ENCODE measurements at regions of chr14 and their contacts with region 1.

Region 1: GRCh38 chr14:74860906-74861733 is 14.8 kb downstream of the PROX2 start:
- DNase-seq: peak; percentile 94
- H3K4me3 Mint-ChIP-seq: no peak overlapping the region
- H3K27ac Mint-ChIP-seq: no peak overlapping the region
- H3K4me1 Mint-ChIP-seq: peaks cover under 1% of the 10 kb centered on the region
- H3K27me3 Mint-ChIP-seq: no peaks in the 10 kb centered on the region

Region 2: DNA sequence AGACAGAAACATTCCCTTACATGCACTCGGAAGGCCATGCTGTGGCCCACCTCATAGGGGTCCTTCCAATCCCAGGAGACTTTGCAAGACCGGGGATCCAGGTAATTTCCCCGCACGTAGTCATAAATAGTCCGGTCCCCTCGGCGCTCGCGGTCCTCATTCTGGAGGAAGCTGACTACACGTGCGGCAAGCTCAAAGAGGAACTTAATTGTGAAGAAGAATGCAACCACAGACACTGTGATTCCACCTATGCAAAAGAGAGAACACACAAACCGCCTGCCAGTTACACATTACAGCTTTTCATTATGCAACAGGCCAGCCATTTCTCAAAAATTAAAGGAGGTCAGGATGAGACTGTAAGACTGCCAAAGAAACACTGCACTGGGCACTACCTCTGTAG is 176.7 kb before region 1 on chr14:
- CTCF ChIA-PET with region 1: no interaction called
- POLR2A ChIA-PET with region 1: no interaction called
- intact Hi-C with region 1: no loop called
- DNase-seq: no peak
- H3K4me3 Mint-ChIP-seq: no peak overlapping the region
- H3K27ac Mint-ChIP-seq: no peak overlapping the region
- H3K4me1 Mint-ChIP-seq: no peaks in the 10 kb centered on the region
- H3K27me3 Mint-ChIP-seq: no peaks in the 10 kb centered on the region

Region 3: GRCh38 chr14:74881431-74882361 is 20.6 kb after region 1 on chr14 and contains the start of gene DLST:
- CTCF ChIA-PET with region 1: interaction called, 165 read pairs
- POLR2A ChIA-PET with region 1: interaction called, 6 read pairs
- intact Hi-C with region 1: loop called (anchors 2 kb)
- DNase-seq: peak; percentile 91
- H3K4me3 Mint-ChIP-seq: peak within 1 kb of the TSS; percentile 99
- H3K27ac Mint-ChIP-seq: peak within 1 kb of the TSS; percentile 97
- H3K4me1 Mint-ChIP-seq: peaks cover 66% of the 10 kb centered on the region
- H3K27me3 Mint-ChIP-seq: no peaks in the 10 kb centered on the region
- total RNA-seq, gene DLST: 132 to 137 TPM

Region 4: DNA sequence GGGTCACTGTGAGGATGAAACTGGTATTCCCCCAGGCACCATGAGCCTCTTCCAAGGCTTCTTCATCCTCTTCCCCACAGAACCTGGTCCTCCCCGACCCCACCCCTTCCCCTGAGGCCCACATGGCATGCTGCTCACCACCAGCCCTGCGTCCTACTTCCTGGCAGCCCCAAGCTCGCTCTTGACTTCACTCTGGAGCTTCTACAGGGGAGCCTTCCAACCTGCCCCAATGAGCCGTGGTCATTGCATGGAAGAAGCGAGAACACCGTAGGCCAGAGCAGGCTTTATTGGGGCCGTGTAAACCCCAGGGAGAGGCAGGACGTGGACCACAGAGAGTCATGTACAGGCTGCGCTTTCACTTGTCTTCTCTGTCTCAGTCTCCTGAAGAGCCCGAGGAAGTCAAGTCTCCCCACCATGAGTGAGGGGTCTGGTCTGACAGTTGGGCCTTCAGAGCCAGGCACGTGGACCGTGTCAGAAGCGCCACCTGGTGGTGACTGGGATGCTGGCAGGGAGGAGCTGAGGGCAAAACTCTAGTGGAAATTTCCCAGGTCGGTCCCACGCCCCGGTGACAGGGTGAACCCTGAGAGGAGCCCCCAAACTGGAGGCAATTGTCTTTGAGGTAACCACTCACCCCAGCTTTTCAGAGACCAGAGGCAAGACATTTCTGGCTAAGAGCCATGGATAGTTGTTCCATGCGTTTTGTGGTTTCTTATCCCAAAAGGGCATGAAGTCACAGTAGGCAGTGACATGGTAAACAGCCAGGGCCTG is 44.4 kb after region 1 on chr14:
- CTCF ChIA-PET with region 1: interaction called, 499 read pairs
- POLR2A ChIA-PET with region 1: interaction called, 4 read pairs
- intact Hi-C with region 1: loop called (anchors 1 kb)
- DNase-seq: peak; percentile 83
- H3K4me3 Mint-ChIP-seq: no peak overlapping the region
- H3K27ac Mint-ChIP-seq: peak overlapping the region; percentile 8
- H3K4me1 Mint-ChIP-seq: no peaks in the 10 kb centered on the region
- H3K27me3 Mint-ChIP-seq: no peaks in the 10 kb centered on the region

Region 5: DNA sequence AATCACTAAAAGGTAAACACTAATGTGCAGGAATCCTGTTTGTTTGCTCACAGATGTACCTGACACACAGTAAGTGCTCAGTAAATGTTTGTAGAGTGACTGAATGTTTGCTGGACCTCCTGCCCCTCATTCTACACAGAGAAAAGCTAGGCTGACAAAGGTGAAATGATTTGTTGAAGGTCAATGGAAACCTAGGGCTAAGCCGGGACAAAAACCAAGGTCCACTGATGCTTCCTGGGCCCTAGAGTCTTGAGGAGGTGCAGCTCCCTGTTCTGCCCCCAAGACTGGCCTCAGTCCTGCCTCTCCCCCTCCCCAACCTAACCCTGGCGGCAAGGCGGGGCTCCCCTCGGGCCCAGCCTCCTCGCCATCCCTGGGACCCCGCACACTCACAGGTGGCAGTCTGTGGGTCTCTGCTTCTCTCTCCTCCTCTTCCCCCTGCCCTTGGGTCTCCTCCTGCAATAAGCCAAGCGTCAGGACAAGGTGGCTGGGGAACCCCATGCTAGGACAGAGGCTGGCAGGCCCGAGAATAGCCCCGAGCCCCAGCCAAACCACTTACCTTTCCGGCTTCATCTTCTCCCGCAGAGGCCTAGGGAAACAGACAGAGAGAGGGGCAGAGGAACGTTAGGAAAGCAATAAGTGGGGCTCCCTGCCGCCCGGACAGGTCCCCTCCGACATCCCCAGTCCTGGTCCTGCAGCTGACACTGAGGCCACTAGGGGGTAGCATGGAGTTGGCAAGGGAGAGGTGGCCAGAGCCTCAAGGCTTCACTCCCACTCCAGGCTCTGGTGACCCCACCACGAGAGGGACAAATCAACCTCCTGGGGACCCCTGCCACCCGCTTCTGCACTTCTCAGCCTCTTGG is 84.9 kb after region 1 on chr14:
- CTCF ChIA-PET with region 1: interaction called, 35 read pairs
- POLR2A ChIA-PET with region 1: no interaction called
- intact Hi-C with region 1: no loop called
- DNase-seq: peak; percentile 84
- H3K4me3 Mint-ChIP-seq: no peak overlapping the region
- H3K27ac Mint-ChIP-seq: no peak overlapping the region
- H3K4me1 Mint-ChIP-seq: peaks cover 25% of the 10 kb centered on the region
- H3K27me3 Mint-ChIP-seq: no peaks in the 10 kb centered on the region

Region 6: GRCh38 chr14:74988131-74988530 is 127.0 kb after region 1 on chr14:
- CTCF ChIA-PET with region 1: no interaction called
- POLR2A ChIA-PET with region 1: no interaction called
- intact Hi-C with region 1: no loop called
- DNase-seq: no peak
- H3K4me3 Mint-ChIP-seq: no peak overlapping the region
- H3K27ac Mint-ChIP-seq: no peak overlapping the region
- H3K4me1 Mint-ChIP-seq: no peaks in the 10 kb centered on the region
- H3K27me3 Mint-ChIP-seq: no peaks in the 10 kb centered on the region

Region 7: DNA sequence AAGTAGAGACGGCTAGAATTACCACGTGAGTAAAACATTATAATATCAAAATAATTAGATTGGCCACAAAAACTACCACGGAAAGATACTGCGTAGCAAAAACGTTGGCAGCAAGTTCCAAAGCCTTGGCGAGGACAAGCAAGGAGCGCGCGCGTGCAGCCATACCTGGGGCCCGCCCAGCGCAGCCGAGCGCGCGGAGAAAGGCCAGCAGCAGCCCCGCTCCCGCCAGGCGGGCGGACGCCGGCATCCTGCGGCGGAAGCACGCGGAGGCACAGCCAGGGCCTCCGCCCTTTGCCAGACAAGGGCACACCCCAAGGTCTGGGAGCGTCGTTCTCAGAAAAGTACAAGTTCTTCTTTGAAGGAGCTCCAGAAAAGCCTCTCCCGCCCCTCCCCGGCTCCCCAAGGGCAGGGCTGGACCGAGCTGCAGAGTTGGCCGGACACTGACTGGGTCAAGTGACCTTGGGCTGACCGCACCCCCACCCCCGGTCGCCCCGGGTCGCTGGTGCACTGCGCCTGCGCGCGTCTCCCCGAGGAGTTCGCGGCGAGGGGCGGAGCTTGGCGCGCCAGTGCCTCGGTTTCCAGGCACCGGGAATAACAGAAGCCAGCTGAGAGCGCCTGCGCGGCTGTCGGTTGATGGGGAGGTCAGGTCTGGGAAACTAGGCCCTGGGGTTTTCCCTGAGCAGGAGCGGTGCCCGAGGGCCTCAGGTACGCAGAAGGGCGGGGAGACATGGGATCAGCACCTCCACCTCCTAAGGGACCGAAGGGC is 208.1 kb after region 1 on chr14 and contains the start of gene ZC2HC1C:
- CTCF ChIA-PET with region 1: interaction called, 18 read pairs
- POLR2A ChIA-PET with region 1: no interaction called
- intact Hi-C with region 1: no loop called
- DNase-seq: peak; percentile 78
- H3K4me3 Mint-ChIP-seq: no peak within 1 kb of the TSS
- H3K27ac Mint-ChIP-seq: peak within 1 kb of the TSS; percentile 42
- H3K4me1 Mint-ChIP-seq: peaks cover 7% of the 10 kb centered on the region
- H3K27me3 Mint-ChIP-seq: no peaks in the 10 kb centered on the region
- total RNA-seq, gene ZC2HC1C: 1.4 to 2.1 TPM

Region 8: DNA sequence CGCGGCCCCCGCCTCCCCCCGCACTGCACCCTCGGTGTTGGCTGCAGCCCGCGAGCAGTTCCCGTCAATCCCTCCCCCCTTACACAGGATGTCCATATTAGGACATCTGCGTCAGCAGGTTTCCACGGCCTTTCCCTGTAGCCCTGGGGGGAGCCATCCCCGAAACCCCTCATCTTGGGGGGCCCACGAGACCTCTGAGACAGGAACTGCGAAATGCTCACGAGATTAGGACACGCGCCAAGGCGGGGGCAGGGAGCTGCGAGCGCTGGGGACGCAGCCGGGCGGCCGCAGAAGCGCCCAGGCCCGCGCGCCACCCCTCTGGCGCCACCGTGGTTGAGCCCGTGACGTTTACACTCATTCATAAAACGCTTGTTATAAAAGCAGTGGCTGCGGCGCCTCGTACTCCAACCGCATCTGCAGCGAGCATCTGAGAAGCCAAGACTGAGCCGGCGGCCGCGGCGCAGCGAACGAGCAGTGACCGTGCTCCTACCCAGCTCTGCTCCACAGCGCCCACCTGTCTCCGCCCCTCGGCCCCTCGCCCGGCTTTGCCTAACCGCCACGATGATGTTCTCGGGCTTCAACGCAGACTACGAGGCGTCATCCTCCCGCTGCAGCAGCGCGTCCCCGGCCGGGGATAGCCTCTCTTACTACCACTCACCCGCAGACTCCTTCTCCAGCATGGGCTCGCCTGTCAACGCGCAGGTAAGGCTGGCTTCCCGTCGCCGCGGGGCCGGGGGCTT is 417.5 kb after region 1 on chr14 and contains the start of gene FOS:
- CTCF ChIA-PET with region 1: no interaction called
- POLR2A ChIA-PET with region 1: no interaction called
- intact Hi-C with region 1: no loop called
- DNase-seq: peak; percentile 92
- H3K4me3 Mint-ChIP-seq: peak within 1 kb of the TSS; percentile 92
- H3K27ac Mint-ChIP-seq: peak within 1 kb of the TSS; percentile 91
- H3K4me1 Mint-ChIP-seq: peaks cover 48% of the 10 kb centered on the region
- H3K27me3 Mint-ChIP-seq: peaks cover 11% of the 10 kb centered on the region
- total RNA-seq, gene FOS: 21.1 to 26.7 TPM

Region 9: GRCh38 chr14:76151398-76152339 is 1290.5 kb after region 1 on chr14 and contains the start of gene GPATCH2L:
- CTCF ChIA-PET with region 1: no interaction called
- POLR2A ChIA-PET with region 1: no interaction called
- intact Hi-C with region 1: no loop called
- DNase-seq: peak; percentile 99
- H3K4me3 Mint-ChIP-seq: peak within 1 kb of the TSS; percentile 93
- H3K27ac Mint-ChIP-seq: peak within 1 kb of the TSS; percentile 96
- H3K4me1 Mint-ChIP-seq: peaks cover 49% of the 10 kb centered on the region
- H3K27me3 Mint-ChIP-seq: no peaks in the 10 kb centered on the region
- total RNA-seq, gene GPATCH2L: 50.1 to 52.1 TPM

Measured in activated CD4-positive, alpha-beta memory T cell treated with anti-CD3 and anti-CD28 coated beads for 36 hours (primary cell).